Activated naive CD4-positive, alpha-beta T cell treated with anti-CD3 and anti-CD28 coated beads for 36 hours (primary cell): ENCODE measurements at regions of chr5 and their contacts with region 1.

Region 1: GRCh38 chr5:66553916-66554575 is 42.1 kb upstream of the MAST4 start:
- DNase-seq: peak; percentile 77
- H3K4me3 Mint-ChIP-seq: no peak overlapping the region
- H3K27ac Mint-ChIP-seq: peak overlapping the region; percentile 13
- H3K4me1 Mint-ChIP-seq: peaks cover 29% of the 10 kb centered on the region
- H3K27me3 Mint-ChIP-seq: peaks cover 22% of the 10 kb centered on the region

Region 2: DNA sequence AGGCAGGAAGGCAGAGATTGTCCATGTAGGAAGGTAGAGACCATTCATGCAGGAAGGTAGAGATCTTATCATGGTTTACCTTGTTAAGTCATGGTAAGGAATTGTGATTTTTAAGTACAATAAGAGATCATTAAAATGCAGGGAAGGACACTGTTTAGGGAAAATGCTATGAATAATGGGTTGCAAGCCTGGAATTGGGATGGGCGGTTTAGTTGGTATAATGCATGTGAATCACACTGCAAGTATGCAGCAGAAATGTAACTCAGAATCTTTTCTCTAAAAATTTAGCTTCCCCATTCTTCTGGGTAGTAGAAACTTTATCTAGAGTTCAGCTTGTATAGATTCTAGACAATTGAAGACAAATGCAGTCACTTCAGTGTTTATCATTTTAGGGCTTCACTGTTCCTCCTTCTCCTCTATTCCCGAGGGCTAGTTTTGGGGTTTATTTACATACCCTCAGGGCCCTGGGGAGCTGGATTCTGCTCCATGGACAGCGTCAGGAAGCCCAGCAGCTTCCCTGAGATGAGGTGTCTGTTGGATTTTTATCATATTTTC is 198.0 kb before region 1 on chr5:
- CTCF ChIA-PET with region 1: no interaction called
- intact Hi-C with region 1: no loop called
- DNase-seq: no peak
- H3K4me3 Mint-ChIP-seq: no peak overlapping the region
- H3K27ac Mint-ChIP-seq: no peak overlapping the region
- H3K4me1 Mint-ChIP-seq: no peaks in the 10 kb centered on the region
- H3K27me3 Mint-ChIP-seq: peaks cover 3% of the 10 kb centered on the region

Region 3: GRCh38 chr5:66540078-66540477 is 14.0 kb before region 1 on chr5:
- CTCF ChIA-PET with region 1: interaction called, 7 read pairs
- intact Hi-C with region 1: loop called (anchors 1 kb)
- DNase-seq: peak; percentile 35
- H3K4me3 Mint-ChIP-seq: no peak overlapping the region
- H3K27ac Mint-ChIP-seq: no peak overlapping the region
- H3K4me1 Mint-ChIP-seq: peaks cover 15% of the 10 kb centered on the region
- H3K27me3 Mint-ChIP-seq: peaks cover 20% of the 10 kb centered on the region

Region 4: DNA sequence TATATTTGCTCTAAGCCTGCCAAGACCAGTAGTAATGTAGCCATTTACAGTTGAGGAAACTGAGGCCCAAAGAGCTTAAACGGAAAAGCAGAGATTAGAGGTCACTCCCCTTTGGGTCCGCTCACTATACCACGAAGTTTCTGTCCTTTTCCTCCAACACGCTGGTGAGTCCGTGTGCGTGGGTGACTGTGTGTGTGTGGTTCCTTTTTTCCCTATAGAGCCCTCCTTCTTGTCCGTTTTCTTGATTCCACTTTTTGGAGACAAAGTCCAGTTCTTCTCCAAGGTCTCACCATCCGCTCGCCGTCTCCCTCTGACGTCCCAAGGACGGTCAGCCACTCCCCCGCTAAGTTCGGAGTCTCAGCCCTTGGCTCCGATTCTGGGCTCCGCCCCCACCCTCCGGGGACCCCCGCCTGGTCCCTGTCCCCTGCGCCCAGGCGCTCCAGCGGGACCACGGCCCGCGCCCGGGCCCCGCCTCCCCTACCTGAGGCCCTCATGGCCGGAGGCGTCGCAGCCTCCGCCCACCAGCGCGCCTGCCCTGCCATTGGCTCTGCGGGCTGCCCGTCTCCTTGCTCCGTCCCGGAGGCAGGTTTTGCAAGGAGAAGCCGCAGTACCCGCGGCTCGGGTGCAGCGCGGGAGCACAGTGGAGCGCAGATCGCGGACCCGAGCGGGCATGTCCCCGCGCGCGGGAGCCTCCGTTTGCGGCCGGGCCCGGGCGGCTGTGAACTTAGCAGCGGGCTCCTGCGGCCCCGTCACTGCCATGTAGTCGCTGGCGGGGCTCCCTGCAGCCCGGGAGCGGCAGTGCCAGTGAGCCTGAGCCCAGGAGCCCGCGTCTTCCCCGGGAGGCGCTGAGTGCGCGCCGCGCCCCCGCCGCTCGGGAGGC is 42.0 kb after region 1 on chr5 and contains the start of gene MAST4:
- CTCF ChIA-PET with region 1: no interaction called
- intact Hi-C with region 1: loop called (anchors 1 kb)
- DNase-seq: peak; percentile 88
- H3K4me3 Mint-ChIP-seq: peak within 1 kb of the TSS; percentile 76
- H3K27ac Mint-ChIP-seq: no peak within 1 kb of the TSS
- H3K4me1 Mint-ChIP-seq: peaks cover 9% of the 10 kb centered on the region
- H3K27me3 Mint-ChIP-seq: peaks cover 56% of the 10 kb centered on the region
- total RNA-seq, gene MAST4: 27.7 to 28.8 TPM

Region 5: DNA sequence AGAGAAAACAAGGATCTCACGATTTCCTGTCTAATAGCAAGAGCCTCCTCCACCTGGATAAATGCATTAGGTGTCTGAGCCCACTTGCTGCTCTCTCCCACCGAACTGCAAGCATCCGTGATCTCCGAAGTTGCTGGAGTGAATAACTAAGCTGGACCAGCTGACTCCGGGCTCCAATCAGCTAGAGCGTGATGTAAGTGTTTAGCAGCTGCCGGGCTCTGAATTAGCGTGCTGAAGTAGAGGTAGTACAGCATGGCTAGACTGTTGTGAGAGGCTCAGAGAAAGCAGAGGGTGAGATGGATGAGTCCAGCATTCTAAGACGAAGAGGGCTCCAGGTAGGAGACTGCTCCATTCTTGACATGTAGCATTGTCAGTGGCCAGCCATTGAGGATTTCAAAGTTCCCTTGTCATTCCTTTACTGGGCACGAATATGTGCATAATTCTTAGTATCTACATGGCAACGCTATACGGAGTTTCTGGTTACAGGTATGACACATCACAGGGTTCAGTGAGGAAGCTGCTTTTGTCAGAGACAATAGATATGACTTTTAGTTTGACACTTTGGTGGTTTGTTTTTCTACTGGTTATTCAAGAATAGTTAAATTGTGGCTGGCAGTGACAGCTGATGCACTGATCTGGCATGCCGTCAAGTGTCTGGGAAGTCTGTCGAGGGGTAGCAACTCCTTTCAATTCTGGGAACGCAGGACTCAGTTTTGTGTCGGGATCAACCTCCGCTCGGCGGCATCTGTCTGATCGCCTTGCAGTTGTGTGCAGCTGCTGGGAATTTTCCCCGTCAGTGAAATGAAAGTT is 274.7 kb after region 1 on chr5:
- CTCF ChIA-PET with region 1: no interaction called
- intact Hi-C with region 1: loop called (anchors 1 kb)
- DNase-seq: peak; percentile 84
- H3K4me3 Mint-ChIP-seq: peak overlapping the region; percentile 87
- H3K27ac Mint-ChIP-seq: peak overlapping the region; percentile 84
- H3K4me1 Mint-ChIP-seq: peaks cover 24% of the 10 kb centered on the region
- H3K27me3 Mint-ChIP-seq: peaks cover 29% of the 10 kb centered on the region